CD4-positive, alpha-beta memory T cell (primary cell): ENCODE measurements at regions of chr6 and their contacts with region 1.

Region 1: GRCh38 chr6:53309059-53309900 is 39.5 kb downstream of the ELOVL5 start:
- DNase-seq: peak in 2 of 5 donors; percentile 24 to 48
- H3K4me3 ChIP-seq: no peak overlapping the region
- H3K4me3 Mint-ChIP-seq: peak overlapping the region in 7 of 8 donors; percentile 53 to 83 (median 65)
- H3K27ac ChIP-seq: peak overlapping the region; percentile 51
- H3K27ac Mint-ChIP-seq: peak overlapping the region; percentile 79 to 93 (median 85)
- H3K4me1 ChIP-seq: peaks cover 80% of the 10 kb centered on the region
- H3K4me1 Mint-ChIP-seq: peaks cover 72 to 84% (median 79%) of the 10 kb centered on the region in 4 donors
- H3K27me3 ChIP-seq: no peaks in the 10 kb centered on the region
- H3K27me3 Mint-ChIP-seq: no peaks in the 10 kb centered on the region

Region 2: DNA sequence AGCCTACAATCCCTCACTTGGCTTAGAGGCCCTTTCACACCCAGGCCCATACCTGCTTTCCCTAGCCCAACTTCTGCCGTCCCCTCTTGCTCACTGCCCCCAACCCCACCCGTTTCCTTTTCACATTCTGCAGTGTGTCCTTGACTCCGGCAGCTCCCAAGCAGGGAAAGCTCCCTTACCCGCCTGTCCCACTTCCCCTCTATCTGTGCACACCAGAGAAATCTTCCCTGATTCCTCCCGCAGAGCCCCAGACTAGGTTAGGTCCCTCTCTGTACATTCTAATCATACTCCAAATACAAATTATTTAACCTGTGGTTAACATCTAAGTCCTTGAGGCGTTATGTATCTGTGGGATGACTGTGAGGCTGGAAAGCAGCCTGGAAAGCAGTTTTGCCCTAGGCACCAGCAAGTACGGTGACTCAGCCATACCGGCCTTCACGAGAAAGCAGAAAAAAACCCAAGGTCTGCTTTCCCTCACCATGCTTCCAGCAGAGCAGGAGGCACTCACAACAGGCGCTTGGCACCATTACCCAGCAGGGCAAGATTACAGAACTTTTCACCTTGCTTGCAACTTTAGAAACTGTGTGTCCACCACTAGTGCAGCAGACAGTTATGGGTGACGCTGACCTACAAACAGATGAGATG is 17.2 kb after region 1 on chr6:
- CTCF ChIA-PET with region 1: interaction called, 12 read pairs
- POLR2A ChIA-PET with region 1: interaction called, 20 read pairs
- intact Hi-C with region 1: no loop called
- DNase-seq: no peak
- H3K4me3 ChIP-seq: no peak overlapping the region
- H3K4me3 Mint-ChIP-seq: peak overlapping the region in 3 of 8 donors; percentile 23 to 52 (median 40)
- H3K27ac ChIP-seq: no peak overlapping the region
- H3K27ac Mint-ChIP-seq: peak overlapping the region; percentile 37 to 85 (median 75)
- H3K4me1 ChIP-seq: peaks cover 86% of the 10 kb centered on the region
- H3K4me1 Mint-ChIP-seq: peaks cover 63 to 83% (median 72%) of the 10 kb centered on the region in 4 donors
- H3K27me3 ChIP-seq: no peaks in the 10 kb centered on the region
- H3K27me3 Mint-ChIP-seq: no peaks in the 10 kb centered on the region

Region 3: GRCh38 chr6:53335208-53335994 is 26.1 kb after region 1 on chr6:
- CTCF ChIA-PET with region 1: interaction called, 4 read pairs
- POLR2A ChIA-PET with region 1: interaction called, 47 read pairs
- intact Hi-C with region 1: no loop called
- DNase-seq: peak; percentile 80 to 92 (median 86)
- H3K4me3 ChIP-seq: peak overlapping the region; percentile 32 to 66
- H3K4me3 Mint-ChIP-seq: peak overlapping the region; percentile 85 to 96 (median 91)
- H3K27ac ChIP-seq: peak overlapping the region; percentile 88
- H3K27ac Mint-ChIP-seq: peak overlapping the region; percentile 95 to 100 (median 99)
- H3K4me1 ChIP-seq: peaks cover 96% of the 10 kb centered on the region
- H3K4me1 Mint-ChIP-seq: peaks cover 80 to 94% (median 87%) of the 10 kb centered on the region in 4 donors
- H3K27me3 ChIP-seq: no peaks in the 10 kb centered on the region
- H3K27me3 Mint-ChIP-seq: no peaks in the 10 kb centered on the region

Region 4: DNA sequence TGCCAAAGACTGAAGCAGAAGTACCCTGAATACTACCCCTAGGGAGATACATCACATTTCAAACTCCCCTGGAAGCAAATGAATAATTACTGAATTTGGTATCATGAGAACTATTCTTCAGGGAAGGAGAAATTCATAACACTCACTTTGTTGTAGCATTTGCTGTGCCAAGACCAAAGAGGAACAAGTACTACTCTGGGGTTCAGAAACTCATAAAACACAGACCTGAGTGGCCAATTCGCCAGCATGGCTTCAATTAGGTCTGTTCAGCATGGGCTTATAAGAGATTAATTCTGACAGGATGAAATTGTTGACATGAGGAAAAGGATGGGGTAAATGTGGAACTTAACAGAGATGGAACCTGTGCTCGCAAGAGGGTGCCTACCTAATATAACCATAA is 32.9 kb after region 1 on chr6:
- CTCF ChIA-PET with region 1: interaction called, 6 read pairs
- POLR2A ChIA-PET with region 1: interaction called, 130 read pairs
- intact Hi-C with region 1: no loop called
- DNase-seq: no peak
- H3K4me3 ChIP-seq: no peak overlapping the region
- H3K4me3 Mint-ChIP-seq: peak overlapping the region in 6 of 8 donors; percentile 41 to 63 (median 54)
- H3K27ac ChIP-seq: no peak overlapping the region
- H3K27ac Mint-ChIP-seq: peak overlapping the region; percentile 37 to 98 (median 78)
- H3K4me1 ChIP-seq: peaks cover 95% of the 10 kb centered on the region
- H3K4me1 Mint-ChIP-seq: peaks cover 87 to 95% (median 91%) of the 10 kb centered on the region in 4 donors
- H3K27me3 ChIP-seq: no peaks in the 10 kb centered on the region
- H3K27me3 Mint-ChIP-seq: no peaks in the 10 kb centered on the region